ENCODE measurements at regions of chr10 and their contacts with region 1.

Region 1: GRCh38 chr10:5889624-5890451 is at the starts of genes ANKRD16 and FBH1:
- DNase-seq: peak; percentile 98
- H3K4me3 Mint-ChIP-seq: peak within 1 kb of the TSS; percentile 80
- H3K27ac Mint-ChIP-seq: peak within 1 kb of the TSS; percentile 49
- H3K4me1 Mint-ChIP-seq: peaks cover 35% of the 10 kb centered on the region
- H3K27me3 Mint-ChIP-seq: no peaks in the 10 kb centered on the region
- CTCF ChIP-seq: no peak
- total RNA-seq, gene ANKRD16: 9.9 and 10.6 TPM in 2 replicates
- total RNA-seq, gene FBH1: 61.8 and 70.5 TPM in 2 replicates

Region 2: GRCh38 chr10:5873515-5873995 is 16.3 kb before region 1 on chr10:
- CTCF ChIA-PET with region 1: interaction called, 10 read pairs
- POLR2A ChIA-PET with region 1: interaction called, 11 read pairs
- intact Hi-C with region 1: no loop called
- DNase-seq: peak; percentile 77
- H3K4me3 Mint-ChIP-seq: no peak overlapping the region
- H3K27ac Mint-ChIP-seq: no peak overlapping the region
- H3K4me1 Mint-ChIP-seq: no peaks in the 10 kb centered on the region
- H3K27me3 Mint-ChIP-seq: no peaks in the 10 kb centered on the region
- CTCF ChIP-seq: peak; percentile 46

Region 3: DNA sequence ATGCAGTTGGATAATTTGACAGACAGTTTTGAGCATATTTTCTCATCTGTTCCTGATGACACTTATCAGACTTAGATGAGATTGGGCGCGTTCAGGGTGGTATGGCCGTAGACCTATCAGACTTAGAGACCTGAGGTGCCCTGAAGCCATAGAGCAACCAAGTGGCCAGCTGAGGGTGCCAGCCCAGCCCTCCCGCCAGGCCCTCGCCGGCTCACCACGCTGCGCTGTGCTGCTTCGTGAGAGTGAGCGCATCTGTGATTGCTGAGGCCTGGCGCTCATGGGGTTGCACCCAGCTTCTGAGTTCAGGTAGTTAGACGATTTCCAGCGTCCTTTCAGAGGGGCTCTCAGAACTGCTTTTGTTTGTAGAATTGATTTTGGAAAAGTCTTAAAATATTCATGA is 10.4 kb after region 1 on chr10:
- CTCF ChIA-PET with region 1: interaction called, 4 read pairs
- POLR2A ChIA-PET with region 1: interaction called, 35 read pairs
- intact Hi-C with region 1: no loop called
- DNase-seq: no peak
- H3K4me3 Mint-ChIP-seq: no peak overlapping the region
- H3K27ac Mint-ChIP-seq: no peak overlapping the region
- H3K4me1 Mint-ChIP-seq: no peaks in the 10 kb centered on the region
- H3K27me3 Mint-ChIP-seq: no peaks in the 10 kb centered on the region
- CTCF ChIP-seq: no peak

Region 4: DNA sequence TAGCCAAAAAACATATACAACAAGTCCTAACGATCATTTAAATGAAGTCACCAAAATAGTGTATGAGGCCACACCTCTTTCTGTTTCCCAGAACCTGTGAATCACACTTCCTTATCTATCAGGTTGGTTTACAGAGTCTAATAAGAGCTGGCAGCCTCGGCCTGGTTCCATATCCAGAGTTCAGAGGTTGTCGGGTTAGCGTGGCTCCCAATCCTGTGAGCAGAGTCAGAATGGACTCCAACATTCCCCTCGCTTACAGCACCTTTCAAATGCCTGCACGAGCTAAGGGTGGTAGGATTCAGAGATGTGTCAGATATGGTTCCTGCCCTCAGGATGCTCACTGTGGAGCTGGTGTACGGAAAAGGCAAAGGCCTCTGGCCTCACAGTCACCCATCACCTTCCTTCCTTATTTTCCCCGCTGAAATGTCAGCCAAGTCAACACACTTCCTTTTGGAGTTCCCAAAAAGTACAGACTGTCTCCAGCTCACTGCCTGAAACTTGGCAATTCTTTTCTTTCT is 81.5 kb after region 1 on chr10:
- CTCF ChIA-PET with region 1: interaction called, 16 read pairs
- POLR2A ChIA-PET with region 1: interaction called, 28 read pairs
- intact Hi-C with region 1: loop called (anchors 2 kb)
- DNase-seq: peak; percentile 65
- H3K4me3 Mint-ChIP-seq: no peak overlapping the region
- H3K27ac Mint-ChIP-seq: peak overlapping the region; percentile 80
- H3K4me1 Mint-ChIP-seq: peaks cover 10% of the 10 kb centered on the region
- H3K27me3 Mint-ChIP-seq: no peaks in the 10 kb centered on the region
- CTCF ChIP-seq: no peak

Region 5: GRCh38 chr10:5977471-5978229 is 87.8 kb after region 1 on chr10 and contains the start of gene IL15RA:
- CTCF ChIA-PET with region 1: interaction called, 16 read pairs
- POLR2A ChIA-PET with region 1: interaction called, 28 read pairs
- intact Hi-C with region 1: loop called (anchors 2 kb)
- DNase-seq: peak; percentile 80
- H3K4me3 Mint-ChIP-seq: peak within 1 kb of the TSS; percentile 73
- H3K27ac Mint-ChIP-seq: peak within 1 kb of the TSS; percentile 70
- H3K4me1 Mint-ChIP-seq: no peaks in the 10 kb centered on the region
- H3K27me3 Mint-ChIP-seq: no peaks in the 10 kb centered on the region
- CTCF ChIP-seq: no peak
- total RNA-seq, gene IL15RA: 6.0 and 7.9 TPM in 2 replicates

Measured in MCF 10A (cell line).